ENCODE measurements at regions of chr2 and their contacts with region 1.

Region 1: DNA sequence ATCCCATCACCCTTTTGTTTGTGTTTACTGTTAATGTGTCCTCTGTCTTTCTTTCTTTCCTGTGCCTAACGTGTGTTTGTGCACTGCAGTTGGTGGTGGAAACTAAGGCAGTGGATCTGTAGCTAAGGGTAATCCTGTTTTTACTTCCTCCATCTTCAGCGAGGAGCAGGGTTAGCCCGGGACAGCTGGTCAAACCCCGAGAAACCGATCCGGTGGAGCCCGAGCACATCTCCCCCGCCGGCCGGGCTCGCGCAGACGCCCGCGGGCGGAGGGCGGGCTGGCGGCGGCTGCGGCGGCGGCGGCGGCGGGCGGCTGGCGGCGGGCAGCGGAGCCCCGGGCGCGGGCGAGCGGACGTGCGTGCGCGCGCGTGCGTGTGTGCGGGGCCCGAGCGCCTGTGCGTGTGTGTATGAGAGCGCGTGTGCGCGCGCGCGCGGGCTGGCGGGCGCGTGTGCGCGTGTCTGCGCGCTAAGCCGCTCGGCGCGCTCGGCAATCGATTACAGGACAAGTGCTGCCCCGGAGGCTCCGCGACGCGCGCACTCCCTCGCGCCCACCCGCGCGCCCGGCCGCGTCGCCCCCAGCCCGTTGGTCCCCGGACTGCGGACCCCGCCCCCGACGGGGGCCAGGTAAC is at the start of gene IKZF2:
- DNase-seq: peak; percentile 83 to 93 (median 89)
- ATAC-seq: peak; percentile 85
- H3K4me3 ChIP-seq: peak within 1 kb of the TSS; percentile 71 to 81
- H3K27ac ChIP-seq: peak within 1 kb of the TSS; percentile 86 to 94
- H3K4me1 ChIP-seq: peaks cover 0 to 5% of the 10 kb centered on the region in 2 donors
- H3K27me3 ChIP-seq: peaks cover 0 to 7% of the 10 kb centered on the region in 2 donors
- CTCF ChIP-seq: no peak
- polyA plus RNA-seq, gene IKZF2: 9.6 to 15.4 (median 13.9) TPM

Region 2: GRCh38 chr2:212777020-212777491 is 374.5 kb before region 1 on chr2:
- intact Hi-C with region 1: loop called in 1 of 2 experiments (anchors 10 kb)
- DNase-seq: peak in 2 of 4 donors; percentile 10 to 28
- ATAC-seq: peak; percentile 69
- H3K4me3 ChIP-seq: no peak overlapping the region
- H3K27ac ChIP-seq: no peak overlapping the region
- H3K4me1 ChIP-seq: no peaks in the 10 kb centered on the region
- H3K27me3 ChIP-seq: no peaks in the 10 kb centered on the region
- CTCF ChIP-seq: peak; percentile 41 to 46

Region 3: GRCh38 chr2:212953170-212953569 is 198.4 kb before region 1 on chr2:
- intact Hi-C with region 1: no loop called
- DNase-seq: no peak
- ATAC-seq: no peak
- H3K4me3 ChIP-seq: no peak overlapping the region
- H3K27ac ChIP-seq: no peak overlapping the region
- H3K4me1 ChIP-seq: no peaks in the 10 kb centered on the region
- H3K27me3 ChIP-seq: no peaks in the 10 kb centered on the region
- CTCF ChIP-seq: no peak